Activated CD4-positive, alpha-beta memory T cell treated with anti-CD3 and anti-CD28 coated beads for 36 hours (primary cell): ENCODE measurements at regions of chr3 and their contacts with region 1.

Region 1: GRCh38 chr3:197736491-197737318 is at the start of gene RUBCN:
- DNase-seq: peak; percentile 97
- H3K4me3 Mint-ChIP-seq: peak within 1 kb of the TSS; percentile 87
- H3K27ac Mint-ChIP-seq: peak within 1 kb of the TSS; percentile 82
- H3K4me1 Mint-ChIP-seq: peaks cover 40% of the 10 kb centered on the region
- H3K27me3 Mint-ChIP-seq: no peaks in the 10 kb centered on the region
- total RNA-seq, gene RUBCN: 32.9 to 33.3 TPM

Region 2: DNA sequence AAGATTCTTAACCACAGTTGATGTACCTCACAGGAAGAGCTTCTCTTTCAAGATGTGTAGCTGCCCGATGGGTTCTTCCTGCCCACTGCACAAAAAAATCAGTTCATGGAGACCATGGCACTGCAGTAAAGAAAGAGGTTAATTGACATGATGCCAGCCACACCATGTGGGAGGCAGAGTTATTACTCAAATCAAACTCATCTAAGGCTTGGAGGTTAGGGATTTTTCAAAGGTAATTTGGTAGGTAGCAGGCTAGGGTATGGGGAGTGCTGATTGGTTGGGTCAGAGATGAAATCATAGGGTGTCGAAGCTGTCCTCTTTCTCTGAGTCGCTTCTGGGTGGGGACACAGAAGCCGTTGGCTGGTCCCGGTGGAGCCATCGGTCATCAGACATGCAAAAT is 123.5 kb before region 1 on chr3:
- CTCF ChIA-PET with region 1: no interaction called
- POLR2A ChIA-PET with region 1: no interaction called
- intact Hi-C with region 1: loop called (anchors 10 kb)
- DNase-seq: peak; percentile 73
- H3K4me3 Mint-ChIP-seq: peak overlapping the region; percentile 5
- H3K27ac Mint-ChIP-seq: peak overlapping the region; percentile 80
- H3K4me1 Mint-ChIP-seq: peaks cover 21% of the 10 kb centered on the region
- H3K27me3 Mint-ChIP-seq: no peaks in the 10 kb centered on the region

Region 3: GRCh38 chr3:197749601-197750395 is 13.1 kb after region 1 on chr3 and contains the start of gene FYTTD1:
- CTCF ChIA-PET with region 1: interaction called, 6 read pairs
- POLR2A ChIA-PET with region 1: interaction called, 7 read pairs
- intact Hi-C with region 1: loop called (anchors 1 kb)
- DNase-seq: peak; percentile 90
- H3K4me3 Mint-ChIP-seq: peak within 1 kb of the TSS; percentile 98
- H3K27ac Mint-ChIP-seq: peak within 1 kb of the TSS; percentile 92
- H3K4me1 Mint-ChIP-seq: peaks cover 33% of the 10 kb centered on the region
- H3K27me3 Mint-ChIP-seq: no peaks in the 10 kb centered on the region
- total RNA-seq, gene FYTTD1: 35.5 to 39.9 TPM

Region 4: GRCh38 chr3:197949754-197950660 is 213.3 kb after region 1 on chr3 and contains the start of gene RPL35A:
- CTCF ChIA-PET with region 1: no interaction called
- POLR2A ChIA-PET with region 1: no interaction called
- intact Hi-C with region 1: loop called (anchors 5 kb)
- DNase-seq: peak; percentile 88
- H3K4me3 Mint-ChIP-seq: peak within 1 kb of the TSS; percentile 93
- H3K27ac Mint-ChIP-seq: peak within 1 kb of the TSS; percentile 97
- H3K4me1 Mint-ChIP-seq: peaks cover 43% of the 10 kb centered on the region
- H3K27me3 Mint-ChIP-seq: no peaks in the 10 kb centered on the region
- total RNA-seq, gene RPL35A: 1,575 to 1,587 TPM